Ovary (tissue), 10 donors: ENCODE measurements at regions of chr10 and their contacts with region 1.

Region 1: DNA sequence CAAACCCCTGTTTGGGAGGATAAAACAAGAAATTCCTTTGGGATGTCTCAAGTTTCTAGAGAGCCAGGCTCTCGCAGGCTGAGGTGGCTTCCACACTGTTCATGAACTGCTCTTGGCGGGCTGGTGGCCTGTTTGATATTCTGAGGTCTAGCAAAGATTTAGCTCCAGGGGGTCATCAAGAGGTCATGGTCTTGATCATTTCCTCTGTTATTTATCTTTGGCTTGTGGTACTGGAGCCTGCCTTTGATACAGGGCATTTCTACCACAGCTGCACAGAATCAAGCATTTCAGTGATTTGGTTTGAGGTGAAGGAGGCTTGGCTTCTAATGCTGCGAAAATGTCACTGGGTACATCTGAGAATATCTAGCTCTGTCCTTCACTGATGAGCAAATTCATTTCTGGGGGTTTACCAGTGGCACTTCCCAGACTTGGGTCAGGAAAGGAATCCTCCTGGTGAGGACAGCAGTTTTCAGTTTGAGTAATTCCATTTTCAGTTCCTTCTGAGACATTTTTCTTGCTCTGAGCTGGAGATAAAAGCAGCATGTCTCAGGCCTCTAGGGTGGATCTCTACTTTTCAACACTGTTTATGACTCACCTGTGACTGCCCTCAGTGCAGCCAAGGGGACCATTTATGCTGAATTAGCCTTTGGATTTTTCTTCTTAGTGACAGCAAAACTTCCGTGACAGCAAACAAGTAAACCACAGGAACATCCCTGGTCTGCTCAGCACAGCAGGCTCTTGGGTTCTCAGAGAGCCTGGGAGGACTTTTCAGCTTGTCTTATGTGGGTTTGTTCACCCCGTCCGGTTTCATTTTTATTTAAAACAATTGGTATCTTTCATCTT is 312.0 kb downstream of the RNLS start:
- DNase-seq: peak in 1 of 5 donors; percentile 15
- H3K4me3 ChIP-seq: no peak overlapping the region
- H3K27ac ChIP-seq: no peak overlapping the region
- H3K4me1 ChIP-seq: peaks cover 5% of the 10 kb centered on the region
- H3K27me3 ChIP-seq: no peaks in the 10 kb centered on the region
- CTCF ChIP-seq: no peak
- EP300 ChIP-seq: no peak
- POLR2A ChIP-seq: no peak

Region 2: DNA sequence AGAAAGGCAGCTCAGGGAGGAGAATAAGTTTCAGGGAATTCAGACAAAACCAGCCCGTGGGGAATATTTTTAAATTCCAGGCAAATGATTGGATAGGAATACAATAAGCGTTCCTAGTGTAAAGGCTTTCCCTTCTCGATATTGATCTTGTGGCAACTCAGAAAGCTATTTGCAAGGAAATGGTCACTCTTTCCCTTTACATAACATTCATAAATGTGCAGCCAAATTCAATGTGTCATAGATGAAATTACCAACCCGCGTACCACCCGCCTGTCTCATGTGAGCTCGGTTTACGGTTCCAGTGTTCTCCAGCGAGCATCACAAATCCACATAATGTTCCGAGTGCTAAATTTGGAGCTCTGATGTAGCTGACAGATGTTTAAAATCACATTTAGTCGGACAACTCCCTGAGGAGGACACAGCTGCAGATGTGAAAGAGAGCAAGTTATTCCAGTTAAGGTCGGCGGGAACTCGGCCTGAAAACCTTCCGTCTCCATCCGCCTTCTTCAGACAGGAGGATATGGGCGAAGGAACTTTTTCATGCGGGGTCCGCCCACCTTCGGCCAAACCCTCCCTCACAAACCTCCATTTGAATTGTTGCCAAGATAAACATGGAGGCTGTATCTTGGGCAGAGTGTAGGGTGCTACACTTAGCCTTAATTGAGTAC is 14.9 kb before region 1 on chr10:
- intact Hi-C with region 1: loop called in 1 of 4 experiments (anchors 2 kb)
- DNase-seq: peak in 3 of 5 donors; percentile 21 to 50 (median 46)
- H3K4me3 ChIP-seq: no peak overlapping the region
- H3K27ac ChIP-seq: no peak overlapping the region
- H3K4me1 ChIP-seq: no peaks in the 10 kb centered on the region
- H3K27me3 ChIP-seq: no peaks in the 10 kb centered on the region
- CTCF ChIP-seq: no peak
- EP300 ChIP-seq: no peak
- POLR2A ChIP-seq: no peak

Region 3: GRCh38 chr10:89494575-89494974 is 1223.5 kb after region 1 on chr10:
- intact Hi-C with region 1: no loop called
- DNase-seq: no peak
- H3K4me3 ChIP-seq: no peak overlapping the region
- H3K27ac ChIP-seq: no peak overlapping the region
- H3K4me1 ChIP-seq: no peaks in the 10 kb centered on the region
- H3K27me3 ChIP-seq: no peaks in the 10 kb centered on the region
- CTCF ChIP-seq: no peak
- EP300 ChIP-seq: no peak
- POLR2A ChIP-seq: no peak